Lower leg skin (tissue), 4 donors: ENCODE measurements at regions of chr2 and their contacts with region 1.

Region 1: DNA sequence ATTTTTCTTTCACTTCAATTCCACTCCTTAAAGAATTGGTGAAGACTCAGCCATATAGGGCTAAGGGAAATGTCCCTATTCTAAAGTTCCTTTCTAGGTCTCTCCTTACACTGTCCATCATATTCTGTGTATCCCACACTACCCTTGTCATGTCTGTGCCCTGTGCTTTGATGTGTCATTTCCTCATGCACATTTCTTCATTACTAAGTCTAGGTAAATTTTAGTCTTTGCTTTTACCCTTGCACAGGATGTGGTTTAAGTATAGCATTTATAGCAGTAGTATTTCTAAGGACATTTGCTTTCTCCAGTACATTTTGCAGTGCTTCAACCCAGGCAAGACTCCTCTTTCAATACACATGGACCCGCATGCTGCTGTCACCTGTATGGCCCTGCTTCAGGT is 221.5 kb upstream of the ACVR2A start:
- DNase-seq: no peak
- H3K4me3 ChIP-seq: no peak overlapping the region
- CTCF ChIP-seq: no peak
- POLR2A ChIP-seq: no peak

Region 2: GRCh38 chr2:147499785-147500184 is 123.5 kb before region 1 on chr2:
- intact Hi-C with region 1: no loop called
- DNase-seq: no peak
- H3K4me3 ChIP-seq: no peak overlapping the region
- CTCF ChIP-seq: no peak
- POLR2A ChIP-seq: no peak

Region 3: GRCh38 chr2:147588134-147588533 is 35.2 kb before region 1 on chr2:
- intact Hi-C with region 1: loop called (anchors 2 kb)
- DNase-seq: no peak
- H3K4me3 ChIP-seq: no peak overlapping the region
- CTCF ChIP-seq: no peak
- POLR2A ChIP-seq: no peak